Panc1 (cell line): ENCODE measurements at regions of chr12 and their contacts with region 1.

Region 1: DNA sequence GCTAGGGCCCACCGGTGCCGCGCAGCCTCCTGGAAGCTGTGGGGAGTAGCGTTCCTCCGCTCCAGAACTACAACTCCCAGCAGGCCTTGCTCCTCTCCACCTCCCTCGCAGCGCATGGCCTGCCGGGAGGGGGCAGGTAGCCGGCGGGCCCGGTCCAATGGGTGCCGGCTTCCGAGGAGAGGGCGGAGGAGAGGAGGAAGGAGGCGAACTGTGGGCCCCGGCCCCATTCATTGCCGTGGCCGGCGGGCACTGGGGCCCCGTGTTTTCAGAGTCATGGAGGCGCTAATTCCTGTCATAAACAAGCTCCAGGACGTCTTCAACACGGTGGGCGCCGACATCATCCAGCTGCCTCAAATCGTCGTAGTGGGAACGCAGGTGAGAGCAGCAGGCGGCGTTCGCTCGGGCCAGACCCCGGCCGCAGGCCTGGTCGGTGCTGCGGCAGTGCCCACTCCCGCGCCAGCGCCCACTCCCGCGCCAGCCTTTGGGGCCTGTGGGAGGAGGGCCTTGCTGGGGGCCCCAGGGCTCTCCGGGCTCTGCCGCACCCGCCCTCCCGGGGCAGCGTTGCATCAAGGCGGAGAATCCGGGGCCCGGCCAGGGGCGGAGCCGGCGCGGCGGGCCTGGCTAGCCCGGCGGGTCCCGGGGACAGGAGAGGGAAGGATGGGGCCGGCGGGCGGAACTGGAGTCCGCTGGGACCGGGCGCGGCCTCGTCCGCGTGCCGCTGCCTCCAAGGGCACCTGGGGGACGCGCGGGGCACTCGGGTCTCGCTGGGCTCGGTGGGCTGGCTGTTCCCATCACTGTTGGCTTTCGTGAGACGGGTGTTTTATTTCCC is at the start of gene DNM1L:
- DNase-seq: peak; percentile 93
- ATAC-seq: peak; percentile 99
- H3K4me3 ChIP-seq: peak within 1 kb of the TSS; percentile 67 to 96
- H3K27ac ChIP-seq: peak within 1 kb of the TSS; percentile 87
- H3K4me1 ChIP-seq: peaks cover 16% of the 10 kb centered on the region
- H3K27me3 ChIP-seq: no peaks in the 10 kb centered on the region
- CTCF ChIP-seq: no peak
- total RNA-seq, gene DNM1L: 91.8 TPM

Region 2: DNA sequence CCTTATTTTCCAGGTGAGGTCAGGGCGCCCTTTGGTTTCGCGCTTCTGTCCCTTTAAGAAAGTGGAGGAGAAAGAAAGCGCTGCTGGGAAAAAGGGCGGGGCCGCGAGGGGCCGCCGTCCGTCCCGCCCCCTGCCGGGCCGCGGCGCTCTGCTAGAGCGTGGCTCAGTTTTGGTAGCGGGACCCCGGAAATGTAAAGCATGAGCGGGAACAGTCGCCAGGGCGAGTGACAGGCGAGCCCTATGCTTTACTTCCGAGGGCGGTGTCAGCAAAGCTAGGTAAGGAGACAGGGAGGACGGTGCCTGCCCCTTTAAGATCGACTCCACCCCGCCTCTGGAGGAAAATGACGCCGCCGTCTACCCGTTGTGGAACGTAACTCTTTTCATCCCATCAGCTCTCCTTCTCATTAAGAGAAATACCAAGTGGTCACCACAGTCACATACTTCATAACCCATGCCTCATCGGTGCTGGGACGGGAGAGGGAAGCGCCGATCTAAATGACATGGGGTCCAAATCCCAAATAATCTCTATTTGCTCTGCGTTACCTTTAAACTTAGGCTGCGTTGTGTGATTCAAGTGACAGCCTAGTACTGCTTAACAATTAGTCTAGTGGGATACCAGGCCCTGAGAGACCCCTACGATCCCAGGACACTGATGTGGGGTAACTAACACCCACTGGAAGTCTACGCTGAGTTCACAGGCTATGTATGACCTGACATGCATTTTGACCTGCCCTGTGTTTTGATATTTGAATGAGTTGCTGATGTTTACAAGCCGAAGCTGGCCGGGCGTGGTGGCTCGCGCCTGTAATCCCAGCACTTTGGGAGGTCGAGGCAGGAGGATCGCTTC is 1020.0 kb before region 1 on chr12 and contains the start of gene ETFBKMT:
- CTCF ChIA-PET with region 1: no interaction called
- POLR2A ChIA-PET with region 1: no interaction called
- in situ Hi-C with region 1: no loop called
- intact Hi-C with region 1: loop called (anchors 10 kb)
- DNase-seq: peak; percentile 94
- ATAC-seq: peak; percentile 99
- H3K4me3 ChIP-seq: peak within 1 kb of the TSS; percentile 80 to 83
- H3K27ac ChIP-seq: peak within 1 kb of the TSS; percentile 93
- H3K4me1 ChIP-seq: peaks cover 7% of the 10 kb centered on the region
- H3K27me3 ChIP-seq: no peaks in the 10 kb centered on the region
- CTCF ChIP-seq: peak; percentile 45
- total RNA-seq, gene ETFBKMT: 1.5 TPM

Region 3: GRCh38 chr12:32768518-32768917 is 89.2 kb after region 1 on chr12:
- CTCF ChIA-PET with region 1: no interaction called
- POLR2A ChIA-PET with region 1: no interaction called
- in situ Hi-C with region 1: no loop called
- intact Hi-C with region 1: no loop called
- DNase-seq: no peak
- ATAC-seq: no peak
- H3K4me3 ChIP-seq: no peak overlapping the region
- H3K27ac ChIP-seq: no peak overlapping the region
- H3K4me1 ChIP-seq: no peaks in the 10 kb centered on the region
- H3K27me3 ChIP-seq: peaks cover 9% of the 10 kb centered on the region; the same call in 1 of the 2 replicates
- CTCF ChIP-seq: no peak

Region 4: GRCh38 chr12:33116284-33116683 is 437.0 kb after region 1 on chr12:
- CTCF ChIA-PET with region 1: no interaction called
- POLR2A ChIA-PET with region 1: no interaction called
- in situ Hi-C with region 1: no loop called
- intact Hi-C with region 1: no loop called
- DNase-seq: no peak
- ATAC-seq: no peak
- H3K4me3 ChIP-seq: no peak overlapping the region
- H3K27ac ChIP-seq: no peak overlapping the region
- H3K4me1 ChIP-seq: no peaks in the 10 kb centered on the region
- H3K27me3 ChIP-seq: no peaks in the 10 kb centered on the region
- CTCF ChIP-seq: no peak